ENCODE measurements at regions of chr6 and their contacts with region 1.

Region 1: GRCh38 chr6:77457720-77458349 is 5.5 kb downstream of the HTR1B start:
- DNase-seq: peak in 1 of 2 donors; percentile 92
- H3K4me3 ChIP-seq: peak overlapping the region in 1 of 2 donors; percentile 27
- H3K27ac ChIP-seq: peak overlapping the region; percentile 63 to 68
- H3K4me1 ChIP-seq: peaks cover 2 to 8% of the 10 kb centered on the region in 2 donors
- H3K27me3 ChIP-seq: no peaks in the 10 kb centered on the region
- CTCF ChIP-seq: peak; percentile 58 to 79 (median 67)

Region 2: GRCh38 chr6:77231438-77232305 is 226.2 kb before region 1 on chr6:
- intact Hi-C with region 1: no loop called
- DNase-seq: no peak
- H3K4me3 ChIP-seq: no peak overlapping the region
- H3K27ac ChIP-seq: no peak overlapping the region
- H3K4me1 ChIP-seq: no peaks in the 10 kb centered on the region
- H3K27me3 ChIP-seq: no peaks in the 10 kb centered on the region
- CTCF ChIP-seq: no peak

Region 3: GRCh38 chr6:77292564-77293546 is 165.0 kb before region 1 on chr6:
- intact Hi-C with region 1: loop called (anchors 10 kb)
- DNase-seq: no peak
- H3K4me3 ChIP-seq: no peak overlapping the region
- H3K27ac ChIP-seq: peak overlapping the region in 1 of 2 donors; percentile 26
- H3K4me1 ChIP-seq: peaks cover 0 to 3% of the 10 kb centered on the region in 2 donors
- H3K27me3 ChIP-seq: no peaks in the 10 kb centered on the region
- CTCF ChIP-seq: no peak

Region 4: DNA sequence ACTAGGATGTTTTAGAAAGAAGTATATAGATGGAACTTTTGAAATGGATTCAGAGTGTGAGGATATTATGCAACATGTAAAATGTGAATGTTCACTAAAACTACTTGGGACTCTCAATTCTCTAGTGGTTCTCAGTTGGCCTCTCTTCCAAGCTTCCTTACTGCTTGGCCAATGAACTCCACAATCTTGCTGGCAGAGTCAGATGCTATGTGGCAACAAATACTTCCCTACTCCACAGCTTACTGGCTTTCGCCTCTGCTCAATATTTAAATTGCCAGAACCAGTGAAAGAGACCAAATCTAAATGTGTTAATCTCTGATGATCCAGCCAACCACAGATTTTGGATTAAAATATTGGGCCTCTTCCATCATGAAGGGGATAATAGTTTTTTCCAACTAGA is 133.0 kb before region 1 on chr6:
- intact Hi-C with region 1: loop called (anchors 2 kb)
- DNase-seq: peak in 1 of 2 donors; percentile 73
- H3K4me3 ChIP-seq: no peak overlapping the region
- H3K27ac ChIP-seq: peak overlapping the region in 1 of 2 donors; percentile 52
- H3K4me1 ChIP-seq: no peaks in the 10 kb centered on the region
- H3K27me3 ChIP-seq: no peaks in the 10 kb centered on the region
- CTCF ChIP-seq: no peak

Region 5: DNA sequence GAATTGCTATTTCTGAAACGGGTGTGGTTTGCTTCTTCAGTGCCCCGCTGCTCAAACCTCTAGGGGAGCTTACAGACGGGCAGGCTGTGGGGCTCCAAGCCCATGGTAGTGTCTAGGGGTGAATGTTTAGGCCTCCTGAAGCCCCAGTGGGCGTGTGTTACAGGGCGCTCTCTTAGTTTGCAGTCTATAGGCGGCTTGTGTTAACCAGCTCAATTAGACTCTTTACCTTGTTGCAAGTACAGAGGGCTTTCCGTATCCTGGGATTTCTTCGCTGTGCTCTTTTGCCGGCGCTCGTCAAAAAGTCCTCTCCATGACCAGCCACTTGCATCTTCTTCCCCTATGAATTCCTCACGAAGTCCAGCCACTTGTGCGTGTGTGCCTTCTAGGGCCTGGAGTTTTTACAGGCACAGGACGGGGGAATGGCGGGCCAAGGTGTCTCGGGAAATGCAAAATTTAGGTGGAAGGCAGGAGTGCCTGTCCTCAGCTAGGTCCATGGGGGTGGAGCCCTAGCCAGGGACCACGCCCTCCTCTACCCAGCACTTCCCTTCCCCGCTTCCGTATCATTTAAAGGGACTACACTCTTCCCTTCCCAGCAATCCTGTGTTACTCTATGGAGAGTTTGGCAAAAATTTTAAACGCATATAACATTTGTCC is 89.0 kb before region 1 on chr6:
- intact Hi-C with region 1: loop called (anchors 5 kb)
- DNase-seq: peak in 1 of 2 donors; percentile 9
- H3K4me3 ChIP-seq: peak overlapping the region; percentile 18 to 63
- H3K27ac ChIP-seq: peak overlapping the region in 1 of 2 donors; percentile 55
- H3K4me1 ChIP-seq: no peaks in the 10 kb centered on the region
- H3K27me3 ChIP-seq: no peaks in the 10 kb centered on the region
- CTCF ChIP-seq: no peak

Region 6: GRCh38 chr6:77403424-77403823 is 54.4 kb before region 1 on chr6:
- intact Hi-C with region 1: loop called (anchors 2 kb)
- DNase-seq: peak in 1 of 2 donors; percentile 65
- H3K4me3 ChIP-seq: no peak overlapping the region
- H3K27ac ChIP-seq: no peak overlapping the region
- H3K4me1 ChIP-seq: no peaks in the 10 kb centered on the region
- H3K27me3 ChIP-seq: no peaks in the 10 kb centered on the region
- CTCF ChIP-seq: no peak

Measured in ascending aorta (tissue), 2 donors.